K562 (cell line): ENCODE measurements at regions of chr17 and their contacts with region 1.

Region 1: DNA sequence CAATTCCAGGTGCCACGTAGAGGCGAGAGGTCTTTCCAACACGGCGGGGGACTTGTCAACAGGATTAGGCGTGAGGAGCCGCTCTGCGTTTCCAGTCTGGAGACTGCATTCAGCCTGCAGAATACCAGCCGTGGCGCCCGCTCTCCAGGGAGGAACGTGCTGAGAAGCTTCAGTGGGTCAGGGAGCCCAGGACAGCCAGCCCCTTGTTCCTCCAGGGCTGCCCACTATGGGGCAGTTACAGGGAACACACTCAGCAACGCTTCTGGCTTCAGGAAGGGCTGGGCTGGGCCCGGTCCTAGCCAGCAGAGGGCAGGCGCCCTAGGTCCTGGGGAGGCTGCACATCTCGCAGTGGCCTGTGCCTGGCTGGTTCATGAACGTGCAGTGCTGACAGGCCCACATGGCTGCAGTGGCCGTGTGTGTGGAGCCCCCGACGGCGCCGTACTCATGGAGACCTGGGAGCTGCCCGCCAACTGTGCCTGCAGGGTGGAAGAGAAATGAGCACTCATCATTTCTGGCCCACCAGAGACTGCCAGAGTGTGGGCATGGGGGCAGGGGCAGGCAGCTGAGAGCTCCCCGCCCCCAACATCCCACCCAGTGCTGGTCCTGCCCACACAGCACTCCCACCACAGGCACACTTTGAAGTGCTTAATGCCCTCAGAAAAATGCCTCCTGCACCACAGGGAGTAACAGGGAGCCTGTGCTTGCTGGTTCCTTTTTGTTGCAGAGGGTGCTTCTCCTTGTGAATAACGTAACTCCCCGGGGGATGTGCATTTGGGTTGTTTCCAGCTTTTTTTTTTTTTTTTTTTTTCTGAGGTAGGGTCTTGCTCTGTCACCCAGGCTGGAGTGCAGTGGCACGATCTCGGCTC is 7.0 kb upstream of the FAAP100 start:
- DNase-seq: no peak
- ATAC-seq: peak; percentile 55
- H3K4me3 ChIP-seq: no peak overlapping the region
- H3K27ac ChIP-seq: no peak overlapping the region
- H3K4me1 ChIP-seq: peaks cover 10 to 36% of the 10 kb centered on the region in 2 experiments
- H3K27me3 ChIP-seq: no peaks in the 10 kb centered on the region
- CTCF ChIP-seq: peak; percentile 19 to 31 (median 25); a peak in 2 of 6 replicates
- EP300 ChIP-seq: no peak
- POLR2A ChIP-seq: no peak
- RAD21 ChIP-seq: no peak

Region 2: DNA sequence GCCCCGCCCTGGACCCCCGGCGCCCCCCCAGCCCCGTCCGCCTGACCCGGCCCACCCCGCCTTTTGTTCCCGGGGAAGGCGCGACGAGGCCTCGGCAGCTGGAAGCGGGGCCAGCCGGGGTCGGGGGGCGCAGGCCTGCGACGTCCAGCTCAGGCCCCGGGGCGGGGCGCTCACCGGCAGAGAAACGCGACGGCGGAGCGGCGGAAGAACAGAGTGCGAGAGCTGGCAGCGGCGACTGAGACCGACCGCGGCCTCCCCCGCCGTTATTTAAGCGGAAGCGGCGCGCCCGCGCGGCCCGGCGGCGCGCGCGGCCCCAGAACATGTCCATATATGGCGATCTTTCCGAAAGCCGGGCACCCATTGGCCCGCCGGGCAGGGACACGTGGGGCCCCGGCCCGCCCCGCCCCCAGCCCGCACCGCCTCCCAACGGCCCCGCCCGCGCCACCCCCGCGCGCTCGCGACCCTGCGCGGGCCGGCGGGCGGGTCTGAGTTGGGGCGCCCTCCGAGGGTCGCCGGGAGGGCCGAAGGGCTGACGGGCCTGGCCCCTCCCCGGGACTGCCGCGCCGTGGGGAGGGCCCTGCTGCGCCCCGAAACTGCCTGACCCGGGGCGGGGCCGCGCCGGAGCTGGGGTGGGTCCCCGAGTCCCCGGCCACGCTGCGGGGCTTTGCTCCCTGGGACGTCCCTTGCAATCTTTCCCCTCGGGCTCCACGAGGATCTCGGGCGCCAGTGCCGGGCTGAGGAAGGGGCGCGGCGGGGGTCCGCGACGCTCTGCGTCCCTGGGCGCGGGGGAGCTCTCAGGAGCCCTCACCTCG is 46.4 kb before region 1 on chr17 and contains the start of gene ACTG1:
- CTCF ChIA-PET with region 1: no interaction called
- POLR2A ChIA-PET with region 1: interaction called, 10 read pairs
- in situ Hi-C with region 1: no loop called
- intact Hi-C with region 1: no loop called
- DNase-seq: peak; percentile 93 to 97 (median 96)
- ATAC-seq: peak; percentile 75
- H3K4me3 ChIP-seq: peak within 1 kb of the TSS; percentile 86
- H3K27ac ChIP-seq: peak within 1 kb of the TSS; percentile 96
- H3K4me1 ChIP-seq: peaks cover 35 to 66% of the 10 kb centered on the region in 2 experiments; a peak in 4 of 5 replicates
- H3K27me3 ChIP-seq: no peaks in the 10 kb centered on the region
- CTCF ChIP-seq: no peak
- EP300 ChIP-seq: peak; percentile 31
- POLR2A ChIP-seq: peak; percentile 98
- RAD21 ChIP-seq: no peak
- polyA plus RNA-seq, gene ACTG1: 259 to 386 TPM